BJ (cell line): ENCODE measurements at regions of chr1 and their contacts with region 1.

Region 1: GRCh38 chr1:205977402-205978014 is 25.7 kb downstream of the RAB7B start:
- DNase-seq: no peak
- H3K4me3 ChIP-seq: no peak overlapping the region
- H3K27me3 ChIP-seq: no peaks in the 10 kb centered on the region
- CTCF ChIP-seq: peak; percentile 96

Region 2: DNA sequence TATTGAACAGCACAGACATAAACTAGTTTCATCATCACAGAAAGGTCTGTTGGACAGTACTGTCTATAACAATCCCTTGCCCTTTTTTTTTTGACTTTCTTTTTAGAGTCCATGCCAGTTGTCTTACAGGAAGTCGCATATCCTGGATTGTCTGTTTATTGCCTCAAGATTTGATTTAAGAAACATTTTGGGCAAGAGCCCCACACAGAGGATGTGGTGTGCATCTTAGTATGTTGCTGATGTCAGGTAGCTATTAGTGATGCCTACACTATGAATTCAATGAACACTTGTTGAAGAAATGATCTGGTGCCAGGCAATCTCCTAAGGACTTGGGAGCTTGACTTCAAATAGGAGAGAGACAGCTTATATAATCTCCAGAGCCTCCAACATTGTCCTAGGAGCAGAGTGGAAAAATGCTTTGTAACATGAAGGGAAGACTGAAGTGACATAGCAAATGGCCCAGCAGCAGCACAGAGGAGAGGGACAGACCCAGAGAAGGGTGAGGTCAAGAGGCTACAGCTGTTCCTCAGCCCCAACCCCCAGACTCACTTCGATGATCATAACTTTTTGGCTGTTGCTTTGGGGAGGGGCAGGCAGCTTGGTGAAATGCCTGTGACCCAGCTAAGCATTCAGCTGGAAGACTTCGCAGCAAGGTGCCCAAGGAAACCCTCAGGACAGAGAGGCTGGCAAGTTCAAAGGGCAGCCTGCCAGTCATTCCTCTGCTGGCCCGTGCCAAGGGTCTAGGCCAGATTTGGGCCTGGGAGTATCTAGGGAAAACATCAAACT is 194.7 kb before region 1 on chr1:
- CTCF ChIA-PET with region 1: interaction called, 18 read pairs
- POLR2A ChIA-PET with region 1: no interaction called
- DNase-seq: no peak
- H3K4me3 ChIP-seq: no peak overlapping the region
- H3K27me3 ChIP-seq: no peaks in the 10 kb centered on the region
- CTCF ChIP-seq: no peak

Region 3: DNA sequence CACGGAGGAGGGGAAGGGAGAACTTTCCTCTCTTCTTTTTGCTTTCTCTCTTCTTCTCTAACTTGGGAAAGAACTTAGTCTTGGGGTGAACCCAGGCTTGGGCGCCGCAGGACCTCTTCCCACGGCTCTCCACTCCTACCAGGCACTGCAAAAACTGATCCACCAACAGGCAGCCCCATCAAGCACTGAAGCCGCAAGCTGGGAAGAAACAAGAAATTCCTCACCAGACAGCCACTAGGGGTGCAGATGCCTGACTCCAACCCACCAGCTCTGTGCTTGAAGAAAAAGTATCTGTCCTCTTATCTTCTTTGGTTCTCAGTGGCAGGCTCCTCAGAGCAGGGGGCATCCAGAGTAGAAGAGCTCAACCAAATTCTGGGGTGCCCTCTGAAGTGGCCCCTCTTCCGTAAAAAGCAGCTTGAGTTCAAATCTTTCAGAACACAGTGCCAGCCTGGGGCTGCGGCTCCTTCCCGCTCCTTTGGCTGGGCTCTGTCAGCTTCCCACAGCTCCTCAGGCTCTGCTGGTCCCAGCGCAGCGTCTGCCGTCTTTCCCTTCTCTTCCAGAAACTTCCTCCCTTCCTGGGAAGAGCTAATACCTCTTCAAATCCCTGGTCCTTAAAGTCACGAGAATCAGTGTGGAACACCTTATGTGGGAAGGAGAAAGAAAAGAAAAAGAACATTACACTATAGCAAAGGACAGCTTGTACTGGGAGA is 166.9 kb before region 1 on chr1:
- CTCF ChIA-PET with region 1: interaction called, 13 read pairs
- POLR2A ChIA-PET with region 1: no interaction called
- DNase-seq: no peak
- H3K4me3 ChIP-seq: no peak overlapping the region
- H3K27me3 ChIP-seq: no peaks in the 10 kb centered on the region
- CTCF ChIP-seq: no peak

Region 4: GRCh38 chr1:205933671-205934618 is 43.6 kb before region 1 on chr1:
- CTCF ChIA-PET with region 1: interaction called, 46 read pairs
- POLR2A ChIA-PET with region 1: no interaction called
- DNase-seq: no peak
- H3K4me3 ChIP-seq: no peak overlapping the region
- H3K27me3 ChIP-seq: peaks cover 1% of the 10 kb centered on the region
- CTCF ChIP-seq: no peak

Region 5: GRCh38 chr1:205994346-205994745 is 16.8 kb after region 1 on chr1:
- CTCF ChIA-PET with region 1: interaction called, 29 read pairs
- POLR2A ChIA-PET with region 1: no interaction called
- DNase-seq: no peak
- H3K4me3 ChIP-seq: no peak overlapping the region
- H3K27me3 ChIP-seq: no peaks in the 10 kb centered on the region
- CTCF ChIP-seq: no peak

Region 6: GRCh38 chr1:206507284-206508129 is 530.0 kb after region 1 on chr1 and contains the start of gene RASSF5:
- CTCF ChIA-PET with region 1: no interaction called
- POLR2A ChIA-PET with region 1: no interaction called
- DNase-seq: no peak
- H3K4me3 ChIP-seq: peak within 1 kb of the TSS; percentile 36
- H3K27me3 ChIP-seq: peaks cover 6% of the 10 kb centered on the region; the same call in 1 of the 2 replicates
- CTCF ChIP-seq: no peak
- polyA plus RNA-seq, gene RASSF5: 1.2 and 2.1 TPM in 2 replicates